Transverse colon (tissue), 4 donors: ENCODE measurements at regions of chr6 and their contacts with region 1.

Region 1: DNA sequence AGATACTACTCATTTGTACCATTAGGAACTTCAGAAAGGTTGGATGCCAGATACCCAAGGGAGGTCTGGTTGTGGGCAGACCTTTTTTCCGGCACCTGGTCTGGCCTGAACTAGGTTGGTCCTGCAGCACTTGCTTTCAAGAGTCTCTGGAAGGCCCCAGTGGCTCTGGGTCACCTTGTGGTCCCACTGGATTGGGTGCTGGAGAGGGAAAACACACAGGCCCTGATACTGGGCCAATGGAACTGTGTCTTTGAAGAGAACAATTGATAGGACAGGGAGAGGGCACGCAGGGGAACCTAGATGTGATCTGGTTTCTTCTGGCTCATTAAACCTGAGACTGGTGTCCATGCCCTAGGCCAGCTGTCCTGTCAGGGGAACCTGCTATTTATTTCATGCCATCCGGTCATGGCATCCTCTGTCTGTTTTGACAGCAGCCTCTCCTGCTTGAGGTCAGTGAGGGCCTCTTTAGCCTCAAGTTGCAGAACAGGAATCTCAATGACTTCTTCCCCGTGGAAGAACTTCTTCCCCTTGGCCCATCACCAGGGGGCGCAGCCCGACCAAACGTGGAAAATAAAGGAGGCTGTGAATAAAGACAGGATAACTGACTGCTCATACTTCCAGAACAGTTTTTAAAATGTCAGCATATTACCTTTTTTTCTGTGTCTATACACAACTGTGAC is 25.0 kb downstream of the TAF8 start:
- DNase-seq: peak; percentile 84
- H3K4me3 ChIP-seq: no peak overlapping the region
- H3K27ac ChIP-seq: no peak overlapping the region
- H3K4me1 ChIP-seq: no peaks in the 10 kb centered on the region
- H3K27me3 ChIP-seq: no peaks in the 10 kb centered on the region
- CTCF ChIP-seq: peak; percentile 78 to 90 (median 78)
- EP300 ChIP-seq: no peak
- POLR2A ChIP-seq: no peak

Region 2: GRCh38 chr6:42166444-42167141 is 91.3 kb after region 1 on chr6:
- in situ Hi-C with region 1: loop called in 2 of 4 experiments (anchors 10 kb)
- intact Hi-C with region 1: loop called (anchors 2 kb)
- DNase-seq: peak; percentile 77
- H3K4me3 ChIP-seq: no peak overlapping the region
- H3K27ac ChIP-seq: peak overlapping the region in 1 of 4 donors; percentile 13
- H3K4me1 ChIP-seq: peaks cover 0 to 4% (median 1%) of the 10 kb centered on the region in 4 donors
- H3K27me3 ChIP-seq: no peaks in the 10 kb centered on the region
- CTCF ChIP-seq: peak; percentile 96 to 98 (median 97)
- EP300 ChIP-seq: no peak
- POLR2A ChIP-seq: no peak

Region 3: DNA sequence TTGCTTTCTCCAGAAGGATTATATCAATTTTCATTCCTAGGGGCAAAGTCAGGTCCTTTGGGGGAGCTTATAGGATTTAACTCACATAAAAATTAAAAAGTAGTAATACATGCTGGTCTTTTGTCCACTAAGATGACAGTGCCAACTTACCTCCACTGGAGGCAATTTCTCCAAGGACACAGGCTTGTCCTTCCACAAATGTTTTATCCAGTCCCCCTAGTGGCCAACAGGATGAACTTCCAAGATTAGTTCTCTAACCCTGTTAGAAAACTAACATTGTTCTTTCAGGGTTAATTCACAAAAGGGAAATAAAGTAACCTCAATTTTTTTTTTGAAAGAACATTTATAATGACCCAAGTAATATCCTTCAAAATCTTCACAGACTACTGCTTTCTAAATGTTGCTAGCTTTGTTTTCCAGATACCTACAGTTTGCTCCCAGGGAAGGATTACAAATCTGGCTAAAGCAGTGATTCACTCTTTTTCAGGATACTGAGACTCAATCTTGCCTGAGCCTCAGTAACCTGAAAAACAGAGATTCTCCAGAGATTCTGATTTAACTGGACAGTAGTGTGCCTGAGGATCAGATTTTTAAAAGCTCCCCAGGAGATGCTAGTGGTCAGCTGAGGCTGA is 456.9 kb after region 1 on chr6:
- in situ Hi-C with region 1: loop called in 3 of 4 experiments (anchors 10 to 25 kb)
- intact Hi-C with region 1: no loop called
- DNase-seq: no peak
- H3K4me3 ChIP-seq: no peak overlapping the region
- H3K27ac ChIP-seq: no peak overlapping the region
- H3K4me1 ChIP-seq: no peaks in the 10 kb centered on the region
- H3K27me3 ChIP-seq: no peaks in the 10 kb centered on the region
- CTCF ChIP-seq: peak; percentile 90 to 95 (median 91)
- EP300 ChIP-seq: no peak
- POLR2A ChIP-seq: no peak

Region 4: GRCh38 chr6:42547407-42548329 is 472.4 kb after region 1 on chr6:
- in situ Hi-C with region 1: loop called in 2 of 4 experiments (anchors 25 kb)
- intact Hi-C with region 1: no loop called
- DNase-seq: peak; percentile 89
- H3K4me3 ChIP-seq: peak overlapping the region in 3 of 4 donors; percentile 21 to 55 (median 38)
- H3K27ac ChIP-seq: peak overlapping the region; percentile 60 to 75 (median 72)
- H3K4me1 ChIP-seq: peaks cover 0 to 12% (median 4%) of the 10 kb centered on the region in 4 donors
- H3K27me3 ChIP-seq: no peaks in the 10 kb centered on the region
- CTCF ChIP-seq: peak; percentile 95 to 99 (median 99)
- EP300 ChIP-seq: no peak
- POLR2A ChIP-seq: no peak

Region 5: DNA sequence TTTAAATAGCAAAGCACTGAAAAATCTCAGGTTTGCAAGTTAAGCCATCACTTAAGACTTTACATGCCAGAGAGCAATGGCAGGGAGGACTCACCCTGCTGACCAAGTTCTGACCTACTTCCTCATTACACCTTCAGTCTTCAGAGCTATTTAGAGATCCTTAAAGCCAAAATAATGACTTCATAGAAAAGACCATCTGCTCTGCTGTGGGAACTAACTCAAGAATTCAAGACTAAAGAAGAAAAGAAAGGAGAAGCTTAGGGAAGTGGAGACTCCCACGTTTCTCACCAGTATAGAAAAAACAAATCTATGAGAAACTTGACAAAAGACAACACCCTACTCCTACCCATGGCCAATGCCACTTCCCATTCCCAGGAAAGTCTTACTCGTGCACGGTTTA is 1471.9 kb after region 1 on chr6:
- in situ Hi-C with region 1: no loop called
- intact Hi-C with region 1: loop called (anchors 5 kb)
- DNase-seq: no peak
- H3K4me3 ChIP-seq: no peak overlapping the region
- H3K27ac ChIP-seq: no peak overlapping the region
- H3K4me1 ChIP-seq: no peaks in the 10 kb centered on the region
- H3K27me3 ChIP-seq: no peaks in the 10 kb centered on the region
- CTCF ChIP-seq: no peak
- EP300 ChIP-seq: no peak
- POLR2A ChIP-seq: no peak